AG04449 (cell line): ENCODE measurements at regions of chr1 and their contacts with region 1.

Region 1: GRCh38 chr1:97033949-97034348 is 312.4 kb downstream of the PTBP2 start:
- DNase-seq: no peak
- H3K4me3 ChIP-seq: no peak overlapping the region
- CTCF ChIP-seq: no peak

Region 2: GRCh38 chr1:96845464-96845863 is 188.5 kb before region 1 on chr1:
- CTCF ChIA-PET with region 1: no interaction called
- POLR2A ChIA-PET with region 1: no interaction called
- DNase-seq: no peak
- H3K4me3 ChIP-seq: no peak overlapping the region
- CTCF ChIP-seq: peak; percentile 52

Region 3: GRCh38 chr1:97050501-97050900 is 16.6 kb after region 1 on chr1:
- CTCF ChIA-PET with region 1: interaction called, 13 read pairs
- POLR2A ChIA-PET with region 1: no interaction called
- DNase-seq: no peak
- H3K4me3 ChIP-seq: no peak overlapping the region
- CTCF ChIP-seq: peak; percentile 39

Region 4: GRCh38 chr1:97163591-97164275 is 129.8 kb after region 1 on chr1:
- CTCF ChIA-PET with region 1: no interaction called
- POLR2A ChIA-PET with region 1: no interaction called
- DNase-seq: no peak
- H3K4me3 ChIP-seq: no peak overlapping the region
- CTCF ChIP-seq: no peak